ENCODE measurements at regions of chr5 and their contacts with region 1.

Region 1: GRCh38 chr5:35626108-35626507 is 8.4 kb downstream of the SPEF2 start:
- DNase-seq: peak; percentile 13
- H3K4me3 ChIP-seq: no peak overlapping the region
- H3K27me3 ChIP-seq: no peaks in the 10 kb centered on the region
- CTCF ChIP-seq: no peak

Region 2: DNA sequence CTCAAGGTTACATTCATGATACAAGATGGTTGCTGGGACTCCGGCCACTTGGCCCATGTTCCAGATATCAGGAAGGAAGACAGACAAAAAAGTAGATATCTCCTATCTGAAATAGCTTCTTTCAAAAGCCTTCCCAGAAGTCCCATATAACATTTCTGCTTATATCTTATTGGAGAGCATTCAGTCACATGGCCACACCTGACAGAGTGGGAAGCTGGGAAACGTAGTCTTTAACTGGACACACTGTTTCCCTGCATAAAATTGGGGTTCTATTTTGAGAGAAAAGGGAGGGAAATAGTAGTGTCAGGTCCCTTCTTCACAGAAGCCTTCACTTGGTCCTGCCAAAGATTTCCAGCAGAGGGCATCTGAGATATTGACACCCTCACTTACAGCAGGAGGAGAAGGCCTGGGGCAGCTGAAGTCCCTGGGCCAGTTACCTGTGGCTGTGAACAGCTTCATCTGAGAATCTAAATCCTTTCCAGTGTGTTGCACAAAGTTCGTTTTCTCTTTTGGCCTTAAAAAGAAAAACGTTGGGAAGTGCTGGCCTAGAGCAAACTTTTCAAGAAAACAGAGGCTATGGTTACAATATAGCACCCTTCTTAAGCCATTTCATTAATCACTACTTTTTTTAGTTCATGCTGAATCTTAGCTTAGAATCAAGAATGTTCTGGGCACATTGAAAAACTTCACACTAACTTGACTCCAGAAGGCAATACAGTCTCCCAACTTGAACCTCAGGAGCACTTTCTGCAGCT is 25.1 kb after region 1 on chr5:
- CTCF ChIA-PET with region 1: interaction called, 12 read pairs
- POLR2A ChIA-PET with region 1: no interaction called
- DNase-seq: no peak
- H3K4me3 ChIP-seq: no peak overlapping the region
- H3K27me3 ChIP-seq: no peaks in the 10 kb centered on the region
- CTCF ChIP-seq: peak; percentile 73

Region 3: DNA sequence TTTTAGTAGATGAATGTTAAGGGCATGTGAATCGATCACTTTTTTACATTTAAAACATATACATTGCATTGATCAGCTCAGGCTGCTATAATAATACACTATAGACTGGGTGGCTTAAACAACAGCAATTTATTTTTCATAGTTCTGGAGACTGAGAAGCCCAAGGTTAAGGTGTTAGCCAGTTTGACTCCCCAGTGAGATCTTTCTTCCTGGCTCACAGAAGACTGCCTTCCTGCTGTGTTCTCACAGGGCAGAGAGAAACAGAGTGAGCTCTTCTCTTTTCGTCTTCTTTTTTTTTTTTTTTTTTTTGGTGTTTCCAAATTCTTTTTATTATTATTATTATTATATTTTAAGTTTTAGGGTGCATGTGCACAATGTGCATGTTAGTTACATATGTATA is 47.9 kb after region 1 on chr5:
- CTCF ChIA-PET with region 1: no interaction called
- POLR2A ChIA-PET with region 1: interaction called, 11 read pairs
- DNase-seq: no peak
- H3K4me3 ChIP-seq: no peak overlapping the region
- H3K27me3 ChIP-seq: no peaks in the 10 kb centered on the region
- CTCF ChIP-seq: no peak

Region 4: DNA sequence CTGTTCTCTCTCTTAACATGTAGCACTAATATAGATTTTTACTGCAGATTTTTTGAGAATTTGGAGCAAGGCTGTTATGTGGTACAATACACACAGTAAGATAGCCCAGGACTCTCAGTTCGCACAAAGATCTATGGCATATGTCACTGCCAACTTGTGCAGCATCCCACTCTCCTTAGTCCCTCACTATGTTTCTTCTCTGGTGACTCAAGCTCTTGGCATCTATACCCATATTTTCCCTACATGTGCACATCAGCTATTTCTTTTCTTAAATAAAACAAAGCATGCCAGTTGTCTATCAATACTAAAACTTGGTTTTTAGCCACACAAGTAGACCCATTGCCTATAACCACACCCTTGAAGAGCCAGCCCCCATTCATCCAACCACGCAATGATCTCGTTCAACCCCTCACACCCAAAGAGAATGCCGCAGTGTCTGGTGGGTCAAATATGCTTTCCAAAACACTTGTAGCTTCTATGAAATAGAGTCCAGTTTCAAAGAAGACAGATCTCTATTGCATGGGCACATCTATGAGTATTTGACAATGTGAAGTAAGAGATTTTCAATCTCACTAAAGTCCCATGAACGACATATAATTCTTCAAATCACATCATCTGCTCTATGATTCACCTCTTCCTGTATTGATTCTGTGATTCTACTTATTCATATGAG is 212.4 kb after region 1 on chr5:
- CTCF ChIA-PET with region 1: no interaction called
- POLR2A ChIA-PET with region 1: no interaction called
- DNase-seq: no peak
- H3K4me3 ChIP-seq: no peak overlapping the region
- H3K27me3 ChIP-seq: no peaks in the 10 kb centered on the region
- CTCF ChIP-seq: no peak